ENCODE measurements at regions of chr5 and their contacts with region 1.

Region 1: GRCh38 chr5:138337685-138338410 is at the start of gene FAM53C:
- DNase-seq: peak; percentile 79
- ATAC-seq: peak; percentile 94
- H3K4me3 ChIP-seq: peak within 1 kb of the TSS; percentile 90
- H3K27ac ChIP-seq: peak within 1 kb of the TSS; percentile 96
- H3K4me1 ChIP-seq: no peaks in the 10 kb centered on the region
- H3K27me3 ChIP-seq: no peaks in the 10 kb centered on the region
- CTCF ChIP-seq: no peak
- EP300 ChIP-seq: peak; percentile 3 to 58; a peak in 1 of 4 replicates
- POLR2A ChIP-seq: peak; percentile 100
- RAD21 ChIP-seq: no peak
- polyA plus RNA-seq, gene FAM53C: 8.0 to 8.8 TPM

Region 2: GRCh38 chr5:138316355-138316754 is 21.5 kb before region 1 on chr5:
- CTCF ChIA-PET with region 1: no interaction called
- POLR2A ChIA-PET with region 1: no interaction called
- RAD21 ChIA-PET with region 1: no interaction called
- SMC1A ChIA-PET with region 1: no interaction called
- in situ Hi-C with region 1: no loop called
- intact Hi-C with region 1: no loop called
- DNase-seq: no peak
- ATAC-seq: no peak
- H3K4me3 ChIP-seq: no peak overlapping the region
- H3K27ac ChIP-seq: no peak overlapping the region
- H3K4me1 ChIP-seq: no peaks in the 10 kb centered on the region
- H3K27me3 ChIP-seq: no peaks in the 10 kb centered on the region
- CTCF ChIP-seq: no peak
- EP300 ChIP-seq: no peak
- POLR2A ChIP-seq: no peak
- RAD21 ChIP-seq: no peak

Region 3: GRCh38 chr5:138542956-138543729 is 205.3 kb after region 1 on chr5 and contains the start of gene ETF1:
- CTCF ChIA-PET with region 1: no interaction called
- POLR2A ChIA-PET with region 1: interaction called, 3 read pairs
- RAD21 ChIA-PET with region 1: no interaction called
- SMC1A ChIA-PET with region 1: no interaction called
- in situ Hi-C with region 1: no loop called
- intact Hi-C with region 1: loop called (anchors 5 kb)
- DNase-seq: peak; percentile 97
- ATAC-seq: peak; percentile 92
- H3K4me3 ChIP-seq: peak within 1 kb of the TSS; percentile 99
- H3K27ac ChIP-seq: peak within 1 kb of the TSS; percentile 100
- H3K4me1 ChIP-seq: peaks cover 17% of the 10 kb centered on the region
- H3K27me3 ChIP-seq: no peaks in the 10 kb centered on the region
- CTCF ChIP-seq: no peak
- EP300 ChIP-seq: 0 out of 4 replicates have a peak, but pooled peaks have one; percentile 6 to 7
- POLR2A ChIP-seq: peak; percentile 86
- RAD21 ChIP-seq: no peak
- polyA plus RNA-seq, gene ETF1: 29.8 to 44.9 TPM

Region 4: GRCh38 chr5:138762110-138762509 is 424.3 kb after region 1 on chr5:
- CTCF ChIA-PET with region 1: no interaction called
- POLR2A ChIA-PET with region 1: no interaction called
- RAD21 ChIA-PET with region 1: no interaction called
- SMC1A ChIA-PET with region 1: no interaction called
- in situ Hi-C with region 1: no loop called
- intact Hi-C with region 1: no loop called
- DNase-seq: no peak
- ATAC-seq: peak; percentile 33; the same call in 2 of the 3 replicates
- H3K4me3 ChIP-seq: no peak overlapping the region
- H3K27ac ChIP-seq: no peak overlapping the region
- H3K4me1 ChIP-seq: no peaks in the 10 kb centered on the region; the same call in 1 of the 2 replicates
- H3K27me3 ChIP-seq: no peaks in the 10 kb centered on the region
- CTCF ChIP-seq: no peak
- EP300 ChIP-seq: no peak
- POLR2A ChIP-seq: no peak
- RAD21 ChIP-seq: no peak

Measured in GM12878 (cell line).